PC-9 (cell line): ENCODE measurements at regions of chr10 and their contacts with region 1.

Region 1: DNA sequence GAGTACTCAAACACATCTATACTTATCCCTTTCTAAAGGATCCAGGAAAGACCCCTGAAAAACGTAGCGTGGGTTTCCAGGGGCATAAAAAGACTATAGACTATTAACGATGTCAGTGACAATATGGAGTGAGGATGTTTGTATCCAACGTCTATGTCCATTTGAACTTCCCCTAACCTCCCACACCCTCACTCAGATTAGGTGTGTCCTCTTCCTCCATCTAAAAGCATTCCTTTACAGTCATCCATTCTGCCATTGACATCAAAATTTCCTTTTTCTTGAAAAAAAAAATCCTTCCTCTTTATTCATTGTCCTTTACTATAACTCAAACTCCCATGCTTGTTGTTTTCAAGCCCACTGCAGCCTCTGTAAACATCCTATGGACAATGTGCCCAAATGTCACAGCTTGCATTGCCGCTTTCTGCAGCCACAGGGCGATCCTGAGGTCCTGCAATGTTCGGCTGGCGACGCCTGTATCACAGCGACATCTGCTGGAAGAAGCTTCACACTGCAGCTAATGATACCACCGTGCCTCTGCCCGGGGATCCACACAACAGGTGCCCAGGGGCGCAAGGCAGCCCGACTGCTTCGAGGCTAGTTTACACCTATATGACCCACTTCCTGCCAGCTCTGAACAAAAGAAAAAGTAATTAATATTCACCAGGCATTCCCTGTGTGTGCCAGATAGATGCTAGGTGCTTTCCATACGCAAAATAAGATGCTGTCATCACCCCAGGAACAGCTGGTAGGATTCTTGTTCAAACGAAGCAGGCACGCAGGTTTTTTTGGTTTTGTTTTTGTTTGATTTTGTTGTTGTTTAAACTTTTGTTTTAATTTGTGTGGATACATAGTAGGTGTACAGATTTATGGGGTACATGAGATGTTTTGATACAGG is 267.9 kb upstream of the GHITM start:
- DNase-seq: peak; percentile 54 to 71
- H3K4me3 ChIP-seq: no peak overlapping the region
- H3K27ac ChIP-seq: no peak overlapping the region
- H3K4me1 ChIP-seq: no peaks in the 10 kb centered on the region
- H3K27me3 ChIP-seq: no peaks in the 10 kb centered on the region
- CTCF ChIP-seq: peak; percentile 97

Region 2: GRCh38 chr10:82796510-82796909 is 1074.9 kb before region 1 on chr10:
- CTCF ChIA-PET with region 1: no interaction called
- POLR2A ChIA-PET with region 1: no interaction called
- intact Hi-C with region 1: loop called (anchors 1 kb)
- DNase-seq: no peak
- H3K4me3 ChIP-seq: no peak overlapping the region
- H3K27ac ChIP-seq: no peak overlapping the region
- H3K4me1 ChIP-seq: no peaks in the 10 kb centered on the region
- H3K27me3 ChIP-seq: no peaks in the 10 kb centered on the region
- CTCF ChIP-seq: peak; percentile 65

Region 3: GRCh38 chr10:83917537-83918506 is 46.4 kb after region 1 on chr10:
- CTCF ChIA-PET with region 1: no interaction called
- POLR2A ChIA-PET with region 1: no interaction called
- intact Hi-C with region 1: no loop called
- DNase-seq: no peak
- H3K4me3 ChIP-seq: no peak overlapping the region
- H3K27ac ChIP-seq: no peak overlapping the region
- H3K4me1 ChIP-seq: no peaks in the 10 kb centered on the region
- H3K27me3 ChIP-seq: no peaks in the 10 kb centered on the region
- CTCF ChIP-seq: no peak